HEK293 (cell line): ENCODE measurements at regions of chrX and their contacts with region 1.

Region 1: DNA sequence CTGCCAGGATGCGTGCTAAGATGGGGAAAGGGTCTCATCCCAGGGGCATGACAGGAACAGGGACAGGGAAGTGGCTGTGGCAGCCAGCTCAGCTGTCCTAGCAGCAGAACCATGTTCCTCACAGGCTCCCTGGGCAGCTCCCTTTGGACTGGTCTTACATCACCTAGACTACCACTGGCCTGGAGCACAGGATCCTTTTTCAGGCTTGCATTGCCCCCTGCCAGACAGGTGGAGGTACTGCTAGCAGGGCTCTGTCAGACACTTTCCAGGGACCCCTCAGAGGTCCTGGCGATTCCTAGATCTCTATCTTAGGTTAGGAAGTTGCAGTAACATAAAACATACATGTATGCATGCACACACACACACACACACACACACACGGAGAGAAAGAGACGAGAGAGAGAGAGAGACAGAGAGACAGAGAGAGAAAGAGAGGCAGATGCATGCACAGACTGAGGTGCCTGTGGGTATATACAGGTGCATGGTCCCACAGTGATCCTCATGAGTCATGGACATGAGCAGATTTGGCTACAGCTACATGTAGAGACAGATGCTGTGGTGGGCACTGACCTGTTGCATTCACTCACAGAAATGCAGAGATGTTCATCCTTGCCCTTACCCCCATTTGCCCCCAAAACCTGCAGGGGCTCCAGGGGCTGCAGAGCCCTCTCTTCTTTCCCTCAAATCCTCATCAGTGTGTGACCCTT is 63.6 kb downstream of the STARD8 start:
- H3K4me3 ChIP-seq: no peak overlapping the region
- H3K27ac ChIP-seq: no peak overlapping the region
- H3K4me1 ChIP-seq: no peaks in the 10 kb centered on the region
- CTCF ChIP-seq: peak; percentile 53

Region 2: GRCh38 chrX:68652326-68653170 is 58.5 kb before region 1 on chrX:
- CTCF ChIA-PET with region 1: no interaction called
- POLR2A ChIA-PET with region 1: no interaction called
- H3K4me3 ChIP-seq: no peak overlapping the region
- H3K27ac ChIP-seq: no peak overlapping the region
- H3K4me1 ChIP-seq: no peaks in the 10 kb centered on the region
- CTCF ChIP-seq: no peak

Region 3: DNA sequence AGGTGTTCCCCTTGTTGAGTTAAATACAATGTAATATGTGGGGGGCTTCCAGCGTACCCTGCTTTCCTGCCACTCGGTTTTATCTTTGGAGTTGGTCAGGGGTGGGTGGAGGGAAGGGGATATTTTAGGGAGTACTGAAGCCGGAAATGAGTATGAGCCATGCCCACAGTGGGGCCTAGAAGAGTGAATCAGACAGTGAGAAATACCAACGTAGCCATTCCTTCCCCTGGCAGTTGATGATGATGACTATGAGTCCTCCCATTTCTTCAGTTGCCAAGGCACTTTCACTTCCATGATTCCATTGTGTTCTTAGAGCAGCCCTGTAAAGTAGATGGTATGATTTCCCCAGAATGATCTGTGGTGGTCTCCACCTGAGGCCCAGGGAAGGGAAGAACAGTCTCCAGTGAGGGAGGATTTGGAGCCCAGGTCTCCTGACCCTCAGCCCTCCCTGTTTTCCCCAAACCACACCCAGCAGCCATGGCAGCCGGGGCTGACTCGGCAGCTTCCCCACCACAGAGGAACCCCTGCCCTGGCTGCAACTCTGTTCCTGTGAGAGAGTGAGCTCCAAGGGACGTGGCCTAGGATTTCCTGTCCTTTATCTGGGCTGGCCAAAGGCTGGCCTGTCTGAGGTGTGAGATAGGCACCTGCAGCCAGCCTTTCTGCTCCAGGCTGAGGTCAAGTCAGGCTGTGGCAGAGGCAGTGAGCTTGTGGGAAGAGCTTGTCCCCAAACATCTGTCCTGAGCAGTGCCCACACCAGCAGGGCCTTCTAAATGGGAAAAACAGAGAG is 10.9 kb before region 1 on chrX:
- CTCF ChIA-PET with region 1: interaction called, 10 read pairs
- POLR2A ChIA-PET with region 1: no interaction called
- H3K4me3 ChIP-seq: no peak overlapping the region
- H3K27ac ChIP-seq: no peak overlapping the region
- H3K4me1 ChIP-seq: no peaks in the 10 kb centered on the region
- CTCF ChIP-seq: no peak